Activated CD4-positive, alpha-beta T cell treated with anti-CD3 and anti-CD28 coated beads, Interleukin-2, amount 10 ng/mL, durations not matched to agents 24 days and 14 days (primary cell): ENCODE measurements at regions of chr2 and their contacts with region 1.

Region 1: GRCh38 chr2:112803691-112804521 is 19.6 kb upstream of the IL1A start:
- DNase-seq: no peak
- H3K4me3 Mint-ChIP-seq: peak overlapping the region; percentile 50
- H3K27ac Mint-ChIP-seq: peak overlapping the region; percentile 94
- H3K4me1 Mint-ChIP-seq: peaks cover 40% of the 10 kb centered on the region
- H3K27me3 Mint-ChIP-seq: no peaks in the 10 kb centered on the region

Region 2: DNA sequence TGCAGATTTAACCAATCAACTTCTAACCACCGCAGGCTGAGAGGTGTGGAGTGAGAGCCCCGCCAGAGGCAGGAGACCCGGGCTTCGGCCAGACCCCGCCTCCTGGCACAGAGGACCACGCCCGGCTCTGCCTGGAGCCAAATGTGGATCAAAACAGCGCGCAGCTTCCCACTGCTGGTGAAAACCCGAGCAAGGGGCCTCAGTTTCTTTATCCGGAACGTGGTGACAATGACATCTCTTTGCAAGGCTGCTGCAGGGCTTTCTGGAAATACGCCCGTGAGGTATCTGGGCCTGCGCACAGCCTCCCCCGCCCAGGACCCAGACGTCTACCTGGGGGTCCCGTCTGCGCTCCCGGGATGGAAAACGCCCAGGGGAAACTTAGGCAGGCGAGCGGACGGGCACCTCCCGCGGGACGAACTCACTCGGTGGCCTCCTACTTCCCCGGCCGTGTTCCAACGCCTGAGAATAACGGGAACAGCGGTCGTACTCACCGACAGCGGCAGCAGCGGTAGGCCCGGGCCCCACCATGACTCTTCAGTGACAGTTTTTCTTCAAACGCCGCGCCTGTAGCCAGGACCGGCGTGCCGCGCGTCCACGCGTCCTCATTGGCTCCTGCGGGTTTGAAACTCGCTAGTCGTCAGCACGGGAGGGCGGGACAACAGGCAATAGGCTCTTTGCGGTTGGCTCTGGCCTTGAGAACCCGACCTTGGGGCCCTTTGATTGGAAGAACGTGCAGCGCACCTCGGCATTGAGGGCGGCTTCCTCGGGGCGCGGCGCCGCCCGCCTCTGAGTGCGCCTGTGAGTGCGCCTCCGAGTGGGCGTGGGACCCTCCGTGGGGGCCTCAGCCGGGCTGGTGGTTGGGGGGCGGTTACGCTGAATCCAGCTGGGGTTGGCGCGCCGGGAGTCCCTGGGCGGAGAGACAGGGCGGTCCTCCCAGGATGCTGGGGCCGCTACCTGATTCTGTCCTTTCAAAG is 39.5 kb before region 1 on chr2 and contains the start of gene CKAP2L:
- intact Hi-C with region 1: loop called (anchors 2 kb)
- DNase-seq: peak; percentile 99
- H3K4me3 Mint-ChIP-seq: peak within 1 kb of the TSS; percentile 92
- H3K27ac Mint-ChIP-seq: peak within 1 kb of the TSS; percentile 93
- H3K4me1 Mint-ChIP-seq: peaks cover 47% of the 10 kb centered on the region
- H3K27me3 Mint-ChIP-seq: no peaks in the 10 kb centered on the region
- total RNA-seq, gene CKAP2L: 17.8 and 17.9 TPM in 2 replicates

Region 3: DNA sequence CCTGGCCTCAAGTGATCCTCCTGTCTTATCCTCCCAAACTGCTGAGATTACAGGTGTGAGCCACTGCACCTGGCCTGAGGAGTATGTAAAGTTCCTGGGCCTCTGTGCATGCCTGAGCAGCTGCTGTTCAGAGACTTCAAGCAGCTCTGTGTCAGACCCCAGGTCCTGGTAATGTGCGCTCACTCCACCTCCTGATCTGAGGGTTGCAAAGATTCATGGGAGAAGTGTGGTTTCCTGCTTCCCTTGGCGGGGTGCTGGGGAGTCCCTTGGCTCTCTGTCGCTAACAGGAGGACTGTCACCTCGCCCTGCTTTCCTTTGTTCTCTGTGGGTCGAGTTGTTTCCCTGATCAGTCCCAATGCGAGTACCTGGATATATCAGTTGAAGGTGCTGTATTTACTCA is 192.7 kb after region 1 on chr2:
- intact Hi-C with region 1: no loop called
- DNase-seq: peak; percentile 95
- H3K4me3 Mint-ChIP-seq: peak overlapping the region; percentile 68
- H3K27ac Mint-ChIP-seq: peak overlapping the region; percentile 84
- H3K4me1 Mint-ChIP-seq: peaks cover 28% of the 10 kb centered on the region
- H3K27me3 Mint-ChIP-seq: peaks cover 5% of the 10 kb centered on the region